PC-3 (cell line): ENCODE measurements at regions of chr2 and their contacts with region 1.

Region 1: DNA sequence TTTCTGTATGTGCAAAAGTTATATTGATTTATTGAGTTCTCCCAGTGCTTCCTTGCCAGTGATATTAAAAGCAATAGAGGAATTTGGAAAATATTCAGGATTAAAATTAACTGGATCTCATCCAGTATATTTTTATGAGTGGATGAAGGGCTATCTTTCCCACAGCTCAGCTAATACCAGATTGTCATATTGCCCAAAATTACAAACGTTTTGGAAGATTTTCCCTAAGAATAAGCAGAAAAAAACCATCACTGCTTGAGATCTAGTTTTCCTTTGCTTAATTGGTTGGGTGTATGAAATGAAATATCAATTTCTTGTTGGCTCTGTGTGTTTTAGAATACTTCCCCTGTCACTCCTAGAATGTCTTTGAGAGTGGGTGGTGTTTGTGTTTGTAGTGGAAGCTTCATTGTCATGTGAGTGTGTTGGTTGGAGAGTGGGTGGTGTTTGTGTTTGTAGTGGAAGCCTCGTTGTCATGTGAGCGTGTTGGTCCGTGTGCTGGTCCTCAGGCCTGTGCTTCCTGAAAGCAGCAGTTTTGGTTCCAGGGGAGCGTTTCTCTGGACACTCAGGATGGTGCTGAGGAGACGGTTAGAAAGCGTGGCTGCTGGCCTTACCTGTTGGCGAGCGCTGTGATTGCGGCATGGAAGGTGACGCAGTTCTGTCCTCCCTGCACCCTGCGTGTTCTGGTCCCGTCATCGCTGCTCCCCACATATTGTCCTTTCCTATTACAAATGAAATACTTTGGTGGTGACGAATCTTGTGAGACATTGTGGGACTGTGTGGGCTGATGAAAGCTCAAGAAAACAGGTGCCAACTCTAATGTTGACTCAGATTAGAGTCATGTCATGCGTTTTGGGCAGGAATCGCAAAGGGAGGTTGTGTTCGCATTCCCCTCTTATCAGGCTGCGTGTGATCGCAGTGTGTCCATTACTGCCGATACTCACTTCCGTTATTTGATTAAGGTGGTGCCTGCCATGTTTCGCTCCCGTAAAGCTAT is 12.4 kb downstream of the ASB1 start:
- DNase-seq: peak; percentile 99
- ATAC-seq: peak; percentile 87
- H3K4me3 ChIP-seq: peak overlapping the region; percentile 55
- H3K27ac ChIP-seq: peak overlapping the region; percentile 99
- H3K4me1 ChIP-seq: peaks cover 78% of the 10 kb centered on the region
- H3K27me3 ChIP-seq: no peaks in the 10 kb centered on the region
- CTCF ChIP-seq: no peak

Region 2: GRCh38 chr2:238288650-238289573 is 150.2 kb before region 1 on chr2:
- CTCF ChIA-PET with region 1: no interaction called
- POLR2A ChIA-PET with region 1: interaction called, 3 read pairs
- intact Hi-C with region 1: loop called (anchors 2 kb)
- DNase-seq: peak; percentile 98
- ATAC-seq: peak; percentile 56
- H3K4me3 ChIP-seq: peak overlapping the region; percentile 80
- H3K27ac ChIP-seq: peak overlapping the region; percentile 94
- H3K4me1 ChIP-seq: peaks cover 48% of the 10 kb centered on the region
- H3K27me3 ChIP-seq: no peaks in the 10 kb centered on the region
- CTCF ChIP-seq: peak; percentile 37; the same call in 1 of the 2 replicates

Region 3: GRCh38 chr2:238370823-238371372 is 68.3 kb before region 1 on chr2:
- CTCF ChIA-PET with region 1: no interaction called
- POLR2A ChIA-PET with region 1: no interaction called
- intact Hi-C with region 1: loop called (anchors 5 kb)
- DNase-seq: peak; percentile 71
- ATAC-seq: peak; percentile 99
- H3K4me3 ChIP-seq: no peak overlapping the region
- H3K27ac ChIP-seq: no peak overlapping the region
- H3K4me1 ChIP-seq: no peaks in the 10 kb centered on the region
- H3K27me3 ChIP-seq: no peaks in the 10 kb centered on the region
- CTCF ChIP-seq: peak; percentile 93

Region 4: GRCh38 chr2:238426568-238427434 is 12.4 kb before region 1 on chr2 and contains the start of gene ASB1:
- CTCF ChIA-PET with region 1: no interaction called
- POLR2A ChIA-PET with region 1: interaction called, 3 read pairs
- intact Hi-C with region 1: loop called (anchors 1 kb)
- DNase-seq: peak; percentile 78
- ATAC-seq: peak; percentile 70
- H3K4me3 ChIP-seq: peak within 1 kb of the TSS; percentile 93
- H3K27ac ChIP-seq: peak within 1 kb of the TSS; percentile 95
- H3K4me1 ChIP-seq: peaks cover 20% of the 10 kb centered on the region
- H3K27me3 ChIP-seq: no peaks in the 10 kb centered on the region
- CTCF ChIP-seq: no peak
- total RNA-seq, gene ASB1: 28.9 and 60.0 TPM in 2 replicates

Region 5: DNA sequence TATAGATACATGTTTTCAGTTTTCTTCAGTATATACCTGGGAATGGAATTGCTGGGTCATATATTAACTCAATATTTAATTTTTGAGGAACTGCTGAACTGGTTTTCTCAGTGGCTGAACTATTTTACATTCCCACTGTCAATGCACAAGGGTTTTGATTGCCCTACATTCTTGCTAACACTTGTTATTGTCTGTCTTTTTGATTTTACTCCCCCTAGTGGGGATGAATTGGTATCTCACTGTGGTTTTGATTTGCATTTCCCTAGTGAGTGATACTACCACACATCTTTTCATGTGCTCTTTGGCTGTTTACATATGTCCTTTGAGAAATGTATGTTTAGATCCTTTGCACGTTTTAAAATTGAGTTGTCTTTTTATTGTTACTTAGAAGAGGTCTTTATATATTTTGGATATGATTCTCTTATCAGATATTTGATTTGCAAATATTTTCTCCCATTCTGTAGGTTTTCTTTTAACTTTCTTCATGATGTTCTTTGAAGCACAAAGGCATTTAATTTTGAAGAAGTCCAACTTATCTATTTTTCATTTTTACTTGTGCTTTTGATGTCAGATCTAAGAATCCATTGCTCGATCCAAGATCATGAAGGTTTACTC is 23.7 kb after region 1 on chr2:
- CTCF ChIA-PET with region 1: no interaction called
- POLR2A ChIA-PET with region 1: no interaction called
- intact Hi-C with region 1: loop called (anchors 1 kb)
- DNase-seq: peak; percentile 73
- ATAC-seq: peak; percentile 72
- H3K4me3 ChIP-seq: no peak overlapping the region
- H3K27ac ChIP-seq: no peak overlapping the region
- H3K4me1 ChIP-seq: peaks cover 19% of the 10 kb centered on the region
- H3K27me3 ChIP-seq: no peaks in the 10 kb centered on the region
- CTCF ChIP-seq: peak; percentile 80

Region 6: GRCh38 chr2:238945433-238946150 is 506.4 kb after region 1 on chr2:
- CTCF ChIA-PET with region 1: no interaction called
- POLR2A ChIA-PET with region 1: no interaction called
- intact Hi-C with region 1: loop called (anchors 10 kb)
- DNase-seq: peak; percentile 45
- ATAC-seq: no peak
- H3K4me3 ChIP-seq: no peak overlapping the region
- H3K27ac ChIP-seq: no peak overlapping the region
- H3K4me1 ChIP-seq: peaks cover 50% of the 10 kb centered on the region
- H3K27me3 ChIP-seq: no peaks in the 10 kb centered on the region
- CTCF ChIP-seq: peak; percentile 61